Activated CD4-positive, alpha-beta T cell treated with anti-CD3 and anti-CD28 coated beads, Interleukin-2, amount 10 ng/mL, durations not matched to agents 24 days and 14 days (primary cell): ENCODE measurements at regions of chr11 and their contacts with region 1.

Region 1: GRCh38 chr11:33161120-33162005 is at the start of gene CSTF3:
- DNase-seq: peak; percentile 99
- H3K4me3 Mint-ChIP-seq: peak within 1 kb of the TSS; percentile 98
- H3K27ac Mint-ChIP-seq: peak within 1 kb of the TSS; percentile 100
- H3K4me1 Mint-ChIP-seq: peaks cover 33% of the 10 kb centered on the region
- H3K27me3 Mint-ChIP-seq: no peaks in the 10 kb centered on the region
- total RNA-seq, gene CSTF3: 36.6 and 38.7 TPM in 2 replicates

Region 2: GRCh38 chr11:32583459-32584271 is 577.7 kb before region 1 on chr11 and contains the start of gene EIF3M:
- intact Hi-C with region 1: loop called (anchors 1 kb)
- DNase-seq: peak; percentile 99
- H3K4me3 Mint-ChIP-seq: peak within 1 kb of the TSS; percentile 98
- H3K27ac Mint-ChIP-seq: peak within 1 kb of the TSS; percentile 98
- H3K4me1 Mint-ChIP-seq: peaks cover 25% of the 10 kb centered on the region
- H3K27me3 Mint-ChIP-seq: no peaks in the 10 kb centered on the region
- total RNA-seq, gene EIF3M: 348 and 351 TPM in 2 replicates

Region 3: DNA sequence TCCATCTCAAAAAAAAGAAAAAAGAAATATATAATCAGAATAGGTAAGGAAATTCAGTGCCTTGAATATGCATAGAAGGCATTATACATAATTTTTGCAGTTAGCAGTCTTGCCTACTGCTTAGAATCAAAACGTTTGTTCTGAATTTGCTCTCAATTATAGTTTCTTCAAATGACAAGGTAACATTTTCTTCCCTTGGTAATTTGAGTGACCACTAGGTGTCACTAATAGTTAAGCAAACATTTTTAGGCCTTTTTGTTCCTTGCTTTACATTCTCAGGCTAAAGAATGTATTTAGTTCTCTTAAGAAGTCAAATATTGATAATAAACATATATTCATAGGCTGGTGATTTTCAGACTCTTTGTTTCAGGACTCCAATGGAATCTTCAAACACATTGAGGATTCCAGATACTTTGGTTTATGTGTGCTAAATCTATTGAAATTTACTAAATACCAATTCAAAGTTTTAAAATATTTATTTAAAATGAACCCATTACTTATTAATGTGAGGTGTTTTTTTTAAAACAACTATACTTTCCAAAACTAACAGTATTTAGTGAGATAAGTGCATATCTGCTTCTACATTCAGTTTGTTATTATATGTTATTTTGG is 200.7 kb before region 1 on chr11:
- intact Hi-C with region 1: loop called (anchors 5 kb)
- DNase-seq: no peak
- H3K4me3 Mint-ChIP-seq: no peak overlapping the region
- H3K27ac Mint-ChIP-seq: no peak overlapping the region
- H3K4me1 Mint-ChIP-seq: peaks cover 9% of the 10 kb centered on the region
- H3K27me3 Mint-ChIP-seq: no peaks in the 10 kb centered on the region

Region 4: GRCh38 chr11:33039274-33040032 is 121.9 kb before region 1 on chr11 and contains the start of gene TCP11L1:
- intact Hi-C with region 1: loop called (anchors 1 kb)
- DNase-seq: peak; percentile 94
- H3K4me3 Mint-ChIP-seq: peak within 1 kb of the TSS; percentile 93
- H3K27ac Mint-ChIP-seq: peak within 1 kb of the TSS; percentile 93
- H3K4me1 Mint-ChIP-seq: peaks cover 21% of the 10 kb centered on the region
- H3K27me3 Mint-ChIP-seq: peaks cover 12% of the 10 kb centered on the region
- total RNA-seq, gene TCP11L1: 12.5 and 14.4 TPM in 2 replicates

Region 5: GRCh38 chr11:33195462-33196173 is 34.3 kb after region 1 on chr11:
- intact Hi-C with region 1: no loop called
- DNase-seq: no peak
- H3K4me3 Mint-ChIP-seq: no peak overlapping the region
- H3K27ac Mint-ChIP-seq: no peak overlapping the region
- H3K4me1 Mint-ChIP-seq: no peaks in the 10 kb centered on the region
- H3K27me3 Mint-ChIP-seq: no peaks in the 10 kb centered on the region

Region 6: GRCh38 chr11:33207408-33207985 is 46.1 kb after region 1 on chr11:
- intact Hi-C with region 1: no loop called
- DNase-seq: no peak
- H3K4me3 Mint-ChIP-seq: no peak overlapping the region
- H3K27ac Mint-ChIP-seq: no peak overlapping the region
- H3K4me1 Mint-ChIP-seq: no peaks in the 10 kb centered on the region
- H3K27me3 Mint-ChIP-seq: peaks cover 2% of the 10 kb centered on the region

Region 7: GRCh38 chr11:33329705-33330329 is 168.5 kb after region 1 on chr11:
- intact Hi-C with region 1: loop called (anchors 1 kb)
- DNase-seq: peak; percentile 80
- H3K4me3 Mint-ChIP-seq: no peak overlapping the region
- H3K27ac Mint-ChIP-seq: no peak overlapping the region
- H3K4me1 Mint-ChIP-seq: peaks cover 4% of the 10 kb centered on the region
- H3K27me3 Mint-ChIP-seq: no peaks in the 10 kb centered on the region

Region 8: GRCh38 chr11:33736148-33736809 is 574.9 kb after region 1 on chr11 and contains the start of gene CD59:
- intact Hi-C with region 1: loop called (anchors 10 kb)
- DNase-seq: peak; percentile 97
- H3K4me3 Mint-ChIP-seq: peak within 1 kb of the TSS; percentile 90
- H3K27ac Mint-ChIP-seq: peak within 1 kb of the TSS; percentile 89
- H3K4me1 Mint-ChIP-seq: peaks cover 36% of the 10 kb centered on the region
- H3K27me3 Mint-ChIP-seq: peaks cover 8% of the 10 kb centered on the region
- total RNA-seq, gene CD59: 94.1 and 98.7 TPM in 2 replicates

Region 9: DNA sequence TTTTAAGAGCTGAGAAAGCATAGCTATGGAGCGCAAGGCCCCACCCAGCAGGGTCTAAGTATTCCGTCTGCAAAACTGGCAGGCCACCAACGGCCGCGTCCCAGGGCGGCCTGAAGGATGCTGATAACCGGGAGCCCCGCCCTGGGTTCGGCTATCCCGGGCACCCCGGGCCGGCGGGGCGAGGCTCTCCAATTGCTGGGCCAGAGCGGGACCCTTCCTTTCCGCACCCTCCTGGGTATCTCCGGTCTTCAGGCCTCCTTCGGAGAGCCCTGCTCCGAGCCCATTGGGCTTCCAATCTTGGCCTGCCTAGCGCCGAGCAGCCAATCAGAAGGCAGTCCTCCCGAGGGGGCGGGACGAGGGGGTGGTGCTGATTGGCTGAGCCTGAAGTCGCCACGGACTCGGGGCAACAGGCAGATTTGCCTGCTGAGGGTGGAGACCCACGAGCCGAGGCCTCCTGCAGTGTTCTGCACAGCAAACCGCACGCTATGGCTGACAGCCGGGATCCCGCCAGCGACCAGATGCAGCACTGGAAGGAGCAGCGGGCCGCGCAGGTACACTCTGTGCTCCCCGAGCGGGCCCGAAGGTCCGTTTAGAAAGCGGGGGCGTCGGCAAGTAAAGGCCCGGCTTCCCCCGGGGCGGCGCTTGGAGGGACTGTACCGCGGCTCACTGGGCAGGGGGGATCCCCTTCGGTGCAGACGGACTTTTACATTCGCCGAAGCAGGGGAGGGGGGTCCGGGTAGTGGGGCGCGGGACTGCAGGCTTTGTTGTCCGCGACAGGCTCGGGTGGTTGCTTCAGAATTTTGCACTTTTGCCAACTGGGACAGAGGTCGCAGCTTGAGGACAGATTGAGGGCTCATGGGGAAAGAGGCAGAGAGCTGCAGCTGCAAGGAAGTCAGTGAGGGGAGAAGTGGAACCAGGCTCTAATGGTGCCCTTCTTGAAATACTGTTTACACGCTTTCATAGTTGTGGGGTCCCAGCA is 1277.5 kb after region 1 on chr11 and contains the start of gene CAT:
- intact Hi-C with region 1: loop called (anchors 2 kb)
- DNase-seq: peak; percentile 99
- H3K4me3 Mint-ChIP-seq: peak within 1 kb of the TSS; percentile 95
- H3K27ac Mint-ChIP-seq: peak within 1 kb of the TSS; percentile 90
- H3K4me1 Mint-ChIP-seq: peaks cover 17% of the 10 kb centered on the region
- H3K27me3 Mint-ChIP-seq: no peaks in the 10 kb centered on the region
- total RNA-seq, gene CAT: 17.4 and 19.0 TPM in 2 replicates